ENCODE measurements at regions of chr12 and their contacts with region 1.

Region 1: DNA sequence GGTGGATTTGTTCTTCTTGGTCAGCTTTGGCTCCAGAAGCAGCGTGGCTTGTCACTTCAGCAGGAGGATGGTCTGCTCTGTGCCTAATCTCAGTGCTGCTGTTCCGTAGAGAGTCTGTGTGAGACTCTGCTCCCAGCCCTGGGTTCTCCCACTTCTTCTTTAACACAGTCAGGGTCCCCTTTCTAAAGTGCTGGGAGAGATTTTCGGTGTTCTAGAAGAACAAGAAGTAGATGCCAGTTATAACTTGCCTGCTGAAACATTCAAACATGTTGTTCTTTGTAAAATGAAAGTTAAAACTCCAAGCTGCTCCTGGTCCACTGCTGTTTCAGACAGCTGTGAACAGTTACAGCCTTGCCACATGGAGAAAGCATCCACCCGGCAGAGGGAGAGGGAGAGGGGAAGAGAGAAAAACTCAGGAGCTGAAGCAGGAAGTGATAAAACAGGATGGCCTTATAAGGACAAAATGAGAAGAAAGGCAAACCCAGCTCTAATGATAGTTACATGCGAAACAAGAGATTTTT is 55.2 kb upstream of the CERS5 start:
- DNase-seq: peak in 1 of 2 experiments; percentile 73
- ATAC-seq: peak; percentile 82 to 89; a peak in 5 of 6 replicates
- H3K4me3 ChIP-seq: peak overlapping the region; percentile 6; the same call in 1 of the 3 replicates
- H3K27ac ChIP-seq: peak overlapping the region; percentile 43 to 67
- H3K4me1 ChIP-seq: peaks cover 54% of the 10 kb centered on the region
- CTCF ChIP-seq: no peak
- EP300 ChIP-seq: no peak
- POLR2A ChIP-seq: no peak
- RAD21 ChIP-seq: no peak

Region 2: DNA sequence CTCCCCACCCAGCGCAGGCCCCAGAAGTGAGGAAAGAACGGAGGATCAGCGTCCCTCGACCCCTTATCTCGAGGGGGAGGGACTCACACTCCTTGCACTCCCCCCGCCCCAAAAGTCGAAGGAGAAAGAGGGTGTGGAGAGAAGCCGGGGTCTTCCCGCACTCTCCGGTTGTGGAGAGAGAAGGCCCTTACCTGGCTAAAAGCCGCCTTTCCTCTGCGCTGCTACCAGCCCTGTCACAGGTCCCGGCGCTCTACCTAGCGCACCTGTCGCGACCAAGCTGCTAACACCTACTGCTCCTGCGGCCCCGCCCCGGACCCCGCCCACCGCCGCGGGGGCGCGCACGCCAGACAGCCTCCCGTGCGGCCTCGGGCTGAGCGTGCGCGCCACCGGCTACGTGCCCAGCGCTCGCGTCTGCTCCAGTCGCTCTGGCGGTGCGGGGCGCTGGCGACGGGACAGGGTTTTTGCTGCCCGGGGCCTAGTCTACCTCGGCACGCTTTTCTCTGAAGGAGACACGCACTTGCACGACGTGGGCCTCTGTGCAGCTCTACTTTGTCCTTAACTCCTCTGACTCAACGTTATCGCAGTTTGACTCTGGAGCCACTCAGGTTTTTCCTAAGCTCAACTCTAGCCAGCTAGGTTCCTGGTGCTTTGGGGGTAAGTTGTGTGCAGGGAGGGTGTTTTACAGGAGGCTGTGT is 61.0 kb after region 1 on chr12 and contains the start of gene LIMA1:
- CTCF ChIA-PET with region 1: interaction called, 6 read pairs
- POLR2A ChIA-PET with region 1: interaction called, 13 read pairs
- DNase-seq: peak; percentile 86 to 95
- ATAC-seq: peak; percentile 97 to 98
- H3K4me3 ChIP-seq: peak within 1 kb of the TSS; percentile 78
- H3K27ac ChIP-seq: peak within 1 kb of the TSS; percentile 85 to 94
- H3K4me1 ChIP-seq: peaks cover 6% of the 10 kb centered on the region; the same call in 1 of the 3 replicates
- CTCF ChIP-seq: no peak
- EP300 ChIP-seq: no peak
- POLR2A ChIP-seq: peak; percentile 99
- RAD21 ChIP-seq: 0 out of 5 replicates have a peak, but pooled peaks of 1 of the 2 experiments have one; percentile 27
- polyA plus RNA-seq, gene LIMA1: 21.4 and 23.4 TPM in 2 replicates

Measured in A549 (cell line).